A549 (cell line): ENCODE measurements at regions of chr1 and their contacts with region 1.

Region 1: GRCh38 chr1:165597883-165598675 is 33.0 kb upstream of the MGST3 start:
- DNase-seq: peak; percentile 87 to 95
- ATAC-seq: peak; percentile 98 to 99
- H3K4me3 ChIP-seq: peak overlapping the region; percentile 58
- H3K27ac ChIP-seq: peak overlapping the region; percentile 64 to 80
- H3K4me1 ChIP-seq: no peaks in the 10 kb centered on the region
- CTCF ChIP-seq: no peak
- EP300 ChIP-seq: no peak
- POLR2A ChIP-seq: no peak; the same call in 1 of the 2 replicates
- RAD21 ChIP-seq: no peak

Region 2: DNA sequence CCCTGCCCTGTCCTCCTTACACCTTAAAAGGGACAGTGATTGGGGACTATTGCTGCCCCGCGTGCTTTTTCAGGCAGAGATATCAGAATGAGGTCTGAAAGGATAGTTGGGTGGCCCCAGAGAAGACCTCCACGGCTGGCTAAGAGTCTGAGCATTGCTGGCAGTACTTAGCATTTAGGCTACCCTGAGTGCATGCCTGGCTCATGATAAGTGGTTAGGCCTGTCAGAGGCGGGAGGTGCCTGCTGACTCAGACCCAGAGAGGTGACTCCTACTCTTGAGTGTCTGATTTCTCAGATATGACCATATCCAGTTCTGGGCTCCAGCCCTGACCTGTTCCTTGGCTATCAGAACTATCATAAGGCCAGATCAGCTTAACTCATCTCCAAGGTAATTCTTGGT is 825.4 kb before region 1 on chr1:
- CTCF ChIA-PET with region 1: no interaction called
- POLR2A ChIA-PET with region 1: interaction called, 15 read pairs
- DNase-seq: peak; percentile 47 to 89
- ATAC-seq: peak; percentile 93 to 95
- H3K4me3 ChIP-seq: no peak overlapping the region
- H3K27ac ChIP-seq: peak overlapping the region; percentile 90 to 94
- H3K4me1 ChIP-seq: peaks cover 98% of the 10 kb centered on the region
- CTCF ChIP-seq: no peak
- EP300 ChIP-seq: 0 out of 5 replicates have a peak, but pooled peaks of 1 of the 2 experiments have one; percentile 37
- POLR2A ChIP-seq: no peak
- RAD21 ChIP-seq: 0 out of 5 replicates have a peak, but pooled peaks of 1 of the 2 experiments have one; percentile 9

Region 3: GRCh38 chr1:165392634-165393571 is 205.2 kb before region 1 on chr1:
- CTCF ChIA-PET with region 1: interaction called, 219 read pairs
- POLR2A ChIA-PET with region 1: no interaction called
- DNase-seq: peak; percentile 61 to 73
- ATAC-seq: peak; percentile 82 to 95
- H3K4me3 ChIP-seq: no peak overlapping the region
- H3K27ac ChIP-seq: no peak overlapping the region
- H3K4me1 ChIP-seq: no peaks in the 10 kb centered on the region
- CTCF ChIP-seq: peak; percentile 88
- EP300 ChIP-seq: no peak
- POLR2A ChIP-seq: no peak
- RAD21 ChIP-seq: peak; percentile 82 to 83

Region 4: GRCh38 chr1:165575468-165576099 is 22.5 kb before region 1 on chr1:
- CTCF ChIA-PET with region 1: interaction called, 22 read pairs
- POLR2A ChIA-PET with region 1: no interaction called
- DNase-seq: no peak
- ATAC-seq: no peak
- H3K4me3 ChIP-seq: no peak overlapping the region
- H3K27ac ChIP-seq: no peak overlapping the region
- H3K4me1 ChIP-seq: no peaks in the 10 kb centered on the region
- CTCF ChIP-seq: no peak
- EP300 ChIP-seq: no peak
- POLR2A ChIP-seq: no peak
- RAD21 ChIP-seq: no peak

Region 5: DNA sequence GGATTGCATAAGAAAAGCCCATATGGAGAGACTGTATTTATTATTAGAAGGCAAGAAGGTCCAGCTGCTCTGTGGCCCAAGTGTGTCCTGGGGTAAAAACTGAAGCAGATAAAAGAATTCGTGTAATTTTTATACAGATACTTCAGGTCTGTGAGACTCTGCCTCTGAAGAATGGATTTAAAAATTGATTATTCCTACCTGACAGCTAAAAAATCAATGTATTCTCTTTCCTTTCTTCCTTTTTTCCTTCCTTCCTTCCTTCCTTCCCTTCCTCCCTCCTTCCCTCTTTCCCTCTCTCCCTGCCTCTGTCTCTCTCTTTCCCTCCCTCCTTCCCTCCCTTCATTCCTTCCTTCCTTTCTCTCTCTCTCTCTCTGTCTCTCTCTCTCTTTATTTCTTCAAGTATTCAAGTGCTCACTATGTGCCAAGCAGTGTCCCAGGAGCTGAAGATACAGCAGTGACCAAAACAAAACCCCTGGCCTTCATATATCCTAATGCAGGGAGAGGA is 21.6 kb after region 1 on chr1:
- CTCF ChIA-PET with region 1: interaction called, 17 read pairs
- POLR2A ChIA-PET with region 1: no interaction called
- DNase-seq: no peak
- ATAC-seq: no peak
- H3K4me3 ChIP-seq: no peak overlapping the region
- H3K27ac ChIP-seq: no peak overlapping the region
- H3K4me1 ChIP-seq: no peaks in the 10 kb centered on the region
- CTCF ChIP-seq: no peak
- EP300 ChIP-seq: no peak
- POLR2A ChIP-seq: no peak
- RAD21 ChIP-seq: no peak

Region 6: GRCh38 chr1:165697881-165698760 is 100.0 kb after region 1 on chr1 and contains the start of gene ALDH9A1:
- CTCF ChIA-PET with region 1: interaction called, 15 read pairs
- POLR2A ChIA-PET with region 1: interaction called, 3 read pairs
- DNase-seq: peak; percentile 86
- ATAC-seq: peak; percentile 97 to 98
- H3K4me3 ChIP-seq: peak within 1 kb of the TSS; percentile 93
- H3K27ac ChIP-seq: peak within 1 kb of the TSS; percentile 93 to 99
- H3K4me1 ChIP-seq: peaks cover 15% of the 10 kb centered on the region
- CTCF ChIP-seq: peak; percentile 58
- EP300 ChIP-seq: no peak
- POLR2A ChIP-seq: peak; percentile 92
- RAD21 ChIP-seq: peak in 1 of 2 experiments; percentile 25; a peak in 1 of 5 replicates
- polyA plus RNA-seq, gene ALDH9A1: 49.6 and 77.1 TPM in 2 replicates